GM12878 (cell line): ENCODE measurements at regions of chr1 and their contacts with region 1.

Region 1: GRCh38 chr1:32215629-32216480 is 6.3 kb downstream of the TMEM234 start:
- DNase-seq: no peak
- ATAC-seq: peak; percentile 95
- H3K4me3 ChIP-seq: no peak overlapping the region
- H3K27ac ChIP-seq: no peak overlapping the region
- H3K4me1 ChIP-seq: no peaks in the 10 kb centered on the region
- H3K27me3 ChIP-seq: no peaks in the 10 kb centered on the region
- CTCF ChIP-seq: peak; percentile 82 to 93 (median 91)
- EP300 ChIP-seq: no peak
- POLR2A ChIP-seq: no peak
- RAD21 ChIP-seq: peak; percentile 82

Region 2: GRCh38 chr1:32142446-32143301 is 73.2 kb before region 1 on chr1:
- CTCF ChIA-PET with region 1: no interaction called
- POLR2A ChIA-PET with region 1: no interaction called
- RAD21 ChIA-PET with region 1: no interaction called
- SMC1A ChIA-PET with region 1: no interaction called
- in situ Hi-C with region 1: no loop called
- intact Hi-C with region 1: no loop called
- DNase-seq: no peak
- ATAC-seq: no peak; the same call in 2 of the 3 replicates
- H3K4me3 ChIP-seq: no peak overlapping the region
- H3K27ac ChIP-seq: no peak overlapping the region
- H3K4me1 ChIP-seq: peaks cover 6% of the 10 kb centered on the region
- H3K27me3 ChIP-seq: no peaks in the 10 kb centered on the region
- CTCF ChIP-seq: no peak
- EP300 ChIP-seq: no peak
- POLR2A ChIP-seq: no peak
- RAD21 ChIP-seq: no peak

Region 3: GRCh38 chr1:32200226-32201010 is 15.4 kb before region 1 on chr1 and contains the start of gene CCDC28B:
- CTCF ChIA-PET with region 1: interaction called, 27 read pairs
- POLR2A ChIA-PET with region 1: interaction called, 12 read pairs
- RAD21 ChIA-PET with region 1: interaction called, 10 read pairs
- SMC1A ChIA-PET with region 1: interaction called, 15 read pairs
- in situ Hi-C with region 1: no loop called
- intact Hi-C with region 1: no loop called
- DNase-seq: peak; percentile 34
- ATAC-seq: peak; percentile 66
- H3K4me3 ChIP-seq: peak within 1 kb of the TSS; percentile 90
- H3K27ac ChIP-seq: peak within 1 kb of the TSS; percentile 89
- H3K4me1 ChIP-seq: peaks cover 16% of the 10 kb centered on the region
- H3K27me3 ChIP-seq: no peaks in the 10 kb centered on the region
- CTCF ChIP-seq: no peak
- EP300 ChIP-seq: peak in 1 of 2 experiments; percentile 20; a peak in 1 of 4 replicates
- POLR2A ChIP-seq: peak; percentile 63; the same call in 1 of the 2 replicates
- RAD21 ChIP-seq: no peak
- polyA plus RNA-seq, gene CCDC28B: 10.5 to 29.8 TPM

Region 4: DNA sequence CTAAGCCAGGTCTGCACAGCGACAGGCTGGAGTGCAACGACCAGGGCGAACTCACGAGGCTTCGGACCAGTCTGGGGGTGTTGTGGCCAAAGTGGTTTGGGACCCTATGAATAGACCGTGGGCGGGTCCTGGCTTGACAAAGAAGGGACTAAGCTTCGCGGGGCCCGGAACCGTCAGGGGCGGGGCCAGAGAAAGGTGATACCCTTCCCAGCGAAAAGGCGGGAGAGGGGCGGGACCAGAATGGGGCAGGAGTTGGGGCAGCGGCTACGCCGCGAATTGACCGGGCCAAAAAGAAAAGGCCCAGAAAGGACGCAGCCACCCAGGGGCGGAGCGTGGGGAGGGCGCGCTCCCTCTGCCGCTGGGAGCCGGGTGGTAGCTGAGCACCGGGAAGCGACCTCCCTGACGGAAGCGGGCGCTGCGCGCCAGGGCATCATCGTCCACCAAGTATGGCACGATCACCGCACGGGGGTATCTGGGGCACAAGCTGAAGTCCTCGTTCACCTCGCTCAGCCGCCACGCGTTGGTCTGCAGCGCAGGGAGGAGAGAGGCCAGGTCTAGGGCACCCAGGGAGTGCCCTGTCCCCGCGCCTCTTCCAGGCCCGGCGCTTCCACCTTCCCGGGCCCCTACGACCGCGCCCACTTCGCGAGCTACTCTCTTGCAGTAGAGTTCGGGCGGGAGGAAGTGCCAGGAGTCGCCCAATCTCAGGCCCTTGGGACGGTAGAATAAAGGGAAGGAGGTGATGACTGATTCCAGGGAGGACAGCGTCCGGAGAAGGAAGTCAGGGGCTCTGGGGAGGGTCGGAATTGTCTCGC is 24.5 kb after region 1 on chr1:
- CTCF ChIA-PET with region 1: interaction called, 123 read pairs
- POLR2A ChIA-PET with region 1: interaction called, 3 read pairs
- RAD21 ChIA-PET with region 1: interaction called, 17 read pairs
- SMC1A ChIA-PET with region 1: interaction called, 37 read pairs
- in situ Hi-C with region 1: no loop called
- intact Hi-C with region 1: no loop called
- DNase-seq: no peak
- ATAC-seq: peak; percentile 81
- H3K4me3 ChIP-seq: peak overlapping the region; percentile 72
- H3K27ac ChIP-seq: peak overlapping the region; percentile 13; the same call in 1 of the 2 replicates
- H3K4me1 ChIP-seq: peaks cover 21% of the 10 kb centered on the region
- H3K27me3 ChIP-seq: no peaks in the 10 kb centered on the region
- CTCF ChIP-seq: peak in 2 of 3 experiments; percentile 27 to 46; a peak in 3 of 6 replicates
- EP300 ChIP-seq: no peak
- POLR2A ChIP-seq: no peak; the same call in 1 of the 2 replicates
- RAD21 ChIP-seq: no peak

Region 5: GRCh38 chr1:32291708-32292492 is 76.0 kb after region 1 on chr1 and contains the start of gene HDAC1:
- CTCF ChIA-PET with region 1: interaction called, 17 read pairs
- POLR2A ChIA-PET with region 1: interaction called, 5 read pairs
- RAD21 ChIA-PET with region 1: interaction called, 4 read pairs
- SMC1A ChIA-PET with region 1: interaction called, 7 read pairs
- in situ Hi-C with region 1: no loop called
- intact Hi-C with region 1: no loop called
- DNase-seq: peak; percentile 83
- ATAC-seq: peak; percentile 99
- H3K4me3 ChIP-seq: peak within 1 kb of the TSS; percentile 100
- H3K27ac ChIP-seq: peak within 1 kb of the TSS; percentile 92
- H3K4me1 ChIP-seq: peaks cover 3% of the 10 kb centered on the region; the same call in 1 of the 2 replicates
- H3K27me3 ChIP-seq: no peaks in the 10 kb centered on the region
- CTCF ChIP-seq: no peak
- EP300 ChIP-seq: peak in 1 of 2 experiments; percentile 34; a peak in 1 of 4 replicates
- POLR2A ChIP-seq: peak; percentile 94
- RAD21 ChIP-seq: no peak
- polyA plus RNA-seq, gene HDAC1: 150 to 151 TPM

Region 6: DNA sequence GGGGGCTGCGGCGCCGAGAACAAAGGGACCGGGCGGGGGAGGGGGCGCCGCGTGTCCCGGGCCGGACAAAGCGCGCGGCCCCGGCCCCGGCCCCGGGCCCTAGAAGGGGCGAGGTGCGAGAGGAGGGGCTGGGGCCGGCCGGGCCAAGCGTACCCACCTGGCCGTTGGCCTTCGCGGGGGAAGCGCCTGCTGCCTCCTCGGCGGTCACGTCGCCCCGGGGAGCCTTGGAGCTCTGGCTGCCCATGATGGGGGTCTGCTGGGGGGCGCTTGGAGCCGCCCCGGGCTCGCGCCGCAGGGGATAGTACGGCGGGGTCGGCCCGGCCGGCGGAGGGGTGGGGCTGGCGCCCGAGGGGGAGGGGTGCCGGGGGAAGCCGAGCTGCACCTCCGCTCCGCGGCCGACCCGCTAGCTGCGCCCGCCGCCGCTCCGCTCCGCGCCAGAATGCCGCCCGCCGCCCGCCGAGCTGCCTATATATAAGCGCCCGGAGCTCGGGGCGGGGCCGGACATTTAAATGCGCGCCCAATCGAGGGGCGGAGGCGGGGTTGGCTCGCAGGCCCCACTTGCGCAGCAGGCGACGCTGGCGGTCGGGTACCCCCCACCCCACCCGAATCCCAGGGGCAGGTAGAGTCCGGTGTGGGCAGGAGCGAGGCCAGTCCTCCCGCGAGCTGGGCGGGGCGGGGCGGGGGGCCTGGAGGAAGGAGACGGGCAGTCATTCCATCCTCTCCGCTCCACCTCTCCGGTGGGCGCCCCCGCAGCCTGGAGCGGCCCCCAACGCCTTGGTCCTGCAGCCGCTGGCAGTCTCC is 120.1 kb after region 1 on chr1 and contains the start of gene MARCKSL1:
- CTCF ChIA-PET with region 1: interaction called, 29 read pairs
- POLR2A ChIA-PET with region 1: interaction called, 5 read pairs
- RAD21 ChIA-PET with region 1: interaction called, 15 read pairs
- SMC1A ChIA-PET with region 1: interaction called, 17 read pairs
- in situ Hi-C with region 1: no loop called
- intact Hi-C with region 1: no loop called
- DNase-seq: no peak
- ATAC-seq: peak; percentile 51
- H3K4me3 ChIP-seq: peak within 1 kb of the TSS; percentile 80
- H3K27ac ChIP-seq: peak within 1 kb of the TSS; percentile 81
- H3K4me1 ChIP-seq: peaks cover 57% of the 10 kb centered on the region
- H3K27me3 ChIP-seq: no peaks in the 10 kb centered on the region
- CTCF ChIP-seq: no peak
- EP300 ChIP-seq: no peak
- POLR2A ChIP-seq: peak; percentile 96
- RAD21 ChIP-seq: no peak
- polyA plus RNA-seq, gene MARCKSL1: 14.5 to 32.6 TPM

Region 7: DNA sequence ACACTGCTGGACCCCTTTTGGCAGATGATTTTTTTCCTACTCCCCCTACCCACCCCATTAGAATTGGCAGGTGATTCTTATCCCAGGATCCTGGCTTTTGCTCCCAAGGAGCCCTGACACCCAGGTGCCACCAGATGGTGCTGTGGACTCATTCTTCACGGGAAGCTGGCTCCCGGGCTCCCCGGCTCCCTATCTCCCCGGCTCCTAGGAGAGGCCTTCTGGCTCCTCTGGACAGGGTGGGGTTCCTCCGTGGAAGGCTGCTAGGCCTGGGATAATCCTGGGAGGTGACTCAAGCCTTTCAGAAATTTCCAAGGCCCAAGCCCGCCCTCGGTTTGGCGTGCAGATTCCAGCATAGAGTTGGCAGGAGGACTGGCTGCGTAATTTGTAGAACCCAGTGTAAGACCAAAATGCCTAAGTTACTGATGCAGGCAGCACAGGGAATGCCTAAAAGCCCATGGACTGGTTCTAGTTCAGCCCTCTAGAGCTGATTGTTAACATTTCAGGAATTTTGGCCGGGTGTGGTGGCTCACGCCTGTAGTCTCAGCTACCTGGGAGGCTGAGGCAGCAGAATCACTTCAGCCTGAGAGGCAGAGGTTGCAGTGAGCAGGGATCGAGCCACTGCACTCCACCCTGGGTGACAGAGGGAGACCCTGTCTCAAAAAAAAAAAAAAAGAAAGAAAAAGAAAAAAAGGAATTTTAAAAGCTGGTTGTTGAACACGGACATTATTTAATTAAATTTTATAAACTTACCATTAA is 185.2 kb after region 1 on chr1:
- CTCF ChIA-PET with region 1: interaction called, 22 read pairs
- POLR2A ChIA-PET with region 1: no interaction called
- RAD21 ChIA-PET with region 1: interaction called, 16 read pairs
- SMC1A ChIA-PET with region 1: interaction called, 7 read pairs
- in situ Hi-C with region 1: no loop called
- intact Hi-C with region 1: no loop called
- DNase-seq: no peak
- ATAC-seq: peak; percentile 95
- H3K4me3 ChIP-seq: no peak overlapping the region
- H3K27ac ChIP-seq: no peak overlapping the region
- H3K4me1 ChIP-seq: no peaks in the 10 kb centered on the region
- H3K27me3 ChIP-seq: no peaks in the 10 kb centered on the region
- CTCF ChIP-seq: peak; percentile 87 to 94 (median 88)
- EP300 ChIP-seq: no peak
- POLR2A ChIP-seq: no peak
- RAD21 ChIP-seq: peak; percentile 81